ENCODE measurements at regions of chr10 and their contacts with region 1.

Region 1: GRCh38 chr10:59625721-59626522 is 83.7 kb downstream of the SLC16A9 start:
- DNase-seq: peak in 1 of 2 donors; percentile 36
- ATAC-seq: peak; percentile 63 to 86 (median 80)
- H3K4me3 ChIP-seq: no peak overlapping the region
- H3K27ac ChIP-seq: peak overlapping the region in 2 of 10 donors; percentile 11 to 36
- H3K4me1 ChIP-seq: peaks cover 0 to 7% (median 0%) of the 10 kb centered on the region in 9 donors
- H3K27me3 ChIP-seq: peaks cover 0 to 11% (median 0%) of the 10 kb centered on the region in 7 donors
- CTCF ChIP-seq: peak; percentile 44 to 86 (median 81)

Region 2: DNA sequence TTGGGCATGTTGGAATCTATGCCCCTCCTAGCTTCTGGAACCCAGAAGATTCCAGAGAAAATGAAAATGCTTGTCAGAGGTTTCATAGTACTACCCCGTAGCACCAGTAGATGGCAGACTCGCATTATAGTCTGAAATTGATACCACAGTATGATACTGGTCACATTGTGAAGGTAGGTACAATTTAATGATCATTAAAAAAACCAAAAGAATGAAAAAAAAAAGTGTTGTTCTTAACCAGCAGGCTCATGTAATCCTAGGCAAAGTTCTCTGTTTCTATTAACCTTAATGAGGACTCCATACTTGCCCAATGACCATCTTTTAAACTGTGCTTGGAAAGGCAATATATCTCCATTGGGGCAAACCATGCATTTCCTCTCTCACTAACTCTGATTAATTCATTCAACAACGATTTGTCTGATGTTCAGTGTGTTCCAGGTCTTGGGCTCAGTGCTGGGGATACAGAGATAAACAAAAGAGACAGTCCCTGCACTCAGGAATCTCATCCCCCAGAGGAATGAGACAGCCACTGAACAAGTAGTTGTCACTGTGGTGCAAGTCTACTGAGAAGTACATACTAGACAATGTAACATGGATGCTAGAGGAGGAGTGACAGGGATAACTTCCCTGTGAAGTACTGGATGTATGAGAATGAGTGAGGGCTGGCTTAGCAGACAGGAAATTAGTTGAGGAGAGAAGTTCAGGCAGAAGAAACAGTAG is 673.0 kb before region 1 on chr10:
- intact Hi-C with region 1: loop called in 5 of 10 experiments (anchors 2 to 10 kb)
- DNase-seq: peak in 1 of 2 donors; percentile 46
- ATAC-seq: peak; percentile 67 to 80 (median 72)
- H3K4me3 ChIP-seq: no peak overlapping the region
- H3K27ac ChIP-seq: peak overlapping the region in 8 of 10 donors; percentile 1 to 63 (median 46)
- H3K4me1 ChIP-seq: peaks cover 0 to 5% (median 0%) of the 10 kb centered on the region in 9 donors
- H3K27me3 ChIP-seq: no peaks in the 10 kb centered on the region
- CTCF ChIP-seq: peak; percentile 67 to 90 (median 78)

Region 3: GRCh38 chr10:59240582-59241183 is 385.2 kb before region 1 on chr10:
- intact Hi-C with region 1: loop called in 8 of 10 experiments (anchors 2 to 10 kb)
- DNase-seq: peak in 1 of 2 donors; percentile 21
- ATAC-seq: no peak
- H3K4me3 ChIP-seq: no peak overlapping the region
- H3K27ac ChIP-seq: no peak overlapping the region
- H3K4me1 ChIP-seq: peaks cover 0 to 4% (median 0%) of the 10 kb centered on the region in 9 donors
- H3K27me3 ChIP-seq: no peaks in the 10 kb centered on the region
- CTCF ChIP-seq: peak; percentile 48 to 84 (median 65)

Region 4: GRCh38 chr10:59814878-59815277 is 189.0 kb after region 1 on chr10:
- intact Hi-C with region 1: loop called in 1 of 10 experiments (anchors 5 kb)
- DNase-seq: no peak
- ATAC-seq: no peak
- H3K4me3 ChIP-seq: no peak overlapping the region
- H3K27ac ChIP-seq: no peak overlapping the region
- H3K4me1 ChIP-seq: peaks cover 0 to 45% (median 10%) of the 10 kb centered on the region in 9 donors
- H3K27me3 ChIP-seq: no peaks in the 10 kb centered on the region
- CTCF ChIP-seq: no peak

Region 5: DNA sequence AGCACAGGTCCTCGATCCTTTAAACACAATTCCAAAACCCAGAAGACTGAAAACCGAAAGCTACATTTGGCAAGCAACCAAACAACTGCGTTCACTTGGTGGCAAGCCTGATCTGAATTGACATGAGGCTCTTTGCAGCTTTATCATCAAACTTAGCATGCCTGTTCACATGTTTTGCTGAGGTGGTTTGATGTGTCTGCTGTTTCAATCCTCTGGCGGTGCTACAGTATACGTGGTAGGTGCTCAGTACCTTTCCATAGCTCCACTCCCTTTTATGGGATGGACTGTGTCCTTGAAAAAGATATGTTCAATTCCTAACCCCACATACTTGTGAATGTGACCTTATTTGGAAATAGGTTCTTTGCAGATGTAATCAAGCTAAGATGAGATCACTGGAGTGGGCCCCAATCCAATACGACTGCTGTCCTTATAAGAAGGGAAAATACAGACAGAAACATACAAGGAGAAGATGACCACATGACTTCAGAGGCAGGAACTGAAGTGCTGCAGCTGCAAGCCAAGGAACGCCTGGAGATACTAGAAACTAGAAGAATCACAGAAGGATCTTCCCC is 247.1 kb after region 1 on chr10:
- intact Hi-C with region 1: no loop called
- DNase-seq: peak in 1 of 2 donors; percentile 41
- ATAC-seq: peak in 7 of 8 donors; percentile 50 to 83 (median 77)
- H3K4me3 ChIP-seq: peak overlapping the region in 5 of 10 donors; percentile 1 to 25 (median 8)
- H3K27ac ChIP-seq: peak overlapping the region in 2 of 10 donors; percentile 22 to 46
- H3K4me1 ChIP-seq: peaks cover 0 to 46% (median 30%) of the 10 kb centered on the region in 9 donors
- H3K27me3 ChIP-seq: no peaks in the 10 kb centered on the region
- CTCF ChIP-seq: no peak

Region 6: GRCh38 chr10:59906417-59907202 is 280.7 kb after region 1 on chr10 and contains the start of gene CCDC6:
- intact Hi-C with region 1: loop called in 4 of 10 experiments (anchors 5 to 10 kb)
- DNase-seq: peak; percentile 91 to 92
- ATAC-seq: peak; percentile 94 to 98 (median 95)
- H3K4me3 ChIP-seq: peak within 1 kb of the TSS; percentile 82 to 98 (median 92)
- H3K27ac ChIP-seq: peak within 1 kb of the TSS; percentile 79 to 96 (median 90)
- H3K4me1 ChIP-seq: peaks cover 3 to 46% (median 36%) of the 10 kb centered on the region in 9 donors
- H3K27me3 ChIP-seq: no peaks in the 10 kb centered on the region
- CTCF ChIP-seq: peak; percentile 54 to 87 (median 80)
- total RNA-seq, gene CCDC6: 13.7 to 22.8 (median 17.4) TPM

Region 7: DNA sequence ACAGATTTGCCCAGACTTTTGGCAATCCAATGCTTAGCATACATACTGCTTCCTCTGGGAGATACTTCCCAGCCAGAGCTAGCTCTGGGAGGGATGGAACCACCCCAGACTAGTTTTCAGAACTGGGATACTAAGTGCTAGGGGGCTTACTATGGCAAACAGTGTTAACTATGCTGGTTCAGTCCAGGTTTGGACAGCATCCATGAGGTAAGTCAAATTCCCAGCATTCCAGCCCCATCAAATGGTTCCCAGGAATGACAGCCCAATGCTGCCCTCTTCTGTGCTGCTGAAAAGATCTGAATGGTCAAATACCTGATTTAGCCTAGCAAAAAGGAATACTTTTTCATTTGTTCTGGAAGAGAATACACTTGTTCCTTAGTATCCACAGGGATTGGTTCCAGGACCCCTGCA is 422.2 kb after region 1 on chr10:
- intact Hi-C with region 1: loop called in 2 of 10 experiments (anchors 5 to 10 kb)
- DNase-seq: no peak
- ATAC-seq: peak in 1 of 8 donors; percentile 31
- H3K4me3 ChIP-seq: no peak overlapping the region
- H3K27ac ChIP-seq: no peak overlapping the region
- H3K4me1 ChIP-seq: peaks cover 0 to 8% (median 0%) of the 10 kb centered on the region in 9 donors
- H3K27me3 ChIP-seq: no peaks in the 10 kb centered on the region
- CTCF ChIP-seq: peak in 7 of 9 donors; percentile 10 to 41 (median 30)

Region 8: GRCh38 chr10:60646966-60647796 is 1021.3 kb after region 1 on chr10:
- intact Hi-C with region 1: loop called in 1 of 10 experiments (anchors 10 kb)
- DNase-seq: peak in 1 of 2 donors; percentile 39
- ATAC-seq: peak in 2 of 8 donors; percentile 42 to 64
- H3K4me3 ChIP-seq: no peak overlapping the region
- H3K27ac ChIP-seq: no peak overlapping the region
- H3K4me1 ChIP-seq: peaks cover 0 to 5% (median 0%) of the 10 kb centered on the region in 9 donors
- H3K27me3 ChIP-seq: no peaks in the 10 kb centered on the region
- CTCF ChIP-seq: peak; percentile 59 to 88 (median 76)